ENCODE measurements at regions of chr5 and their contacts with region 1.

Region 1: GRCh38 chr5:150398722-150399523 is 13.8 kb downstream of the CD74 start:
- DNase-seq: peak; percentile 82
- CTCF ChIP-seq: peak; percentile 75

Region 2: DNA sequence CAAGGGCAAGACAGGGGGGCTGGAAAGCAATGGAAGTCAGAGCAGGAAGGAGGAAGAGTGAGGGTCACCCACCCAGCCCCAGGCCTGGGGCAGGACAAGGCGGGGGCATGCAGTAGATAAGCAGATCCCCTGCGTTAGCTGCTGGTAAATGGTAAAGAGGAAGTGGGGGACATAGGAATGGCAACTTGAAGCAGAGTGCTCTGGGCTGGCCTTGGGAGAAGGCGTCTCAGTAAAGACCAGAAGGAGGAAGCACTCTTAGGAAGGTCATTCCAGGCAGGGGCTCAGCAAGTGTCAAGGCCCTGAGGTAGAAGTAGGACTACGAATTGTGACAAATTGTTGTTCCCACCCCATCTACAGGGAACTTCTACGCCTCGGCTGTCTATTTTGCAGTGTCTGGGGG is 26.3 kb before region 1 on chr5:
- CTCF ChIA-PET with region 1: interaction called, 10 read pairs
- POLR2A ChIA-PET with region 1: interaction called, 3 read pairs
- DNase-seq: no peak
- CTCF ChIP-seq: no peak

Region 3: GRCh38 chr5:150377964-150378694 is 20.8 kb before region 1 on chr5:
- CTCF ChIA-PET with region 1: interaction called, 10 read pairs
- POLR2A ChIA-PET with region 1: interaction called, 19 read pairs
- DNase-seq: no peak
- CTCF ChIP-seq: no peak

Region 4: DNA sequence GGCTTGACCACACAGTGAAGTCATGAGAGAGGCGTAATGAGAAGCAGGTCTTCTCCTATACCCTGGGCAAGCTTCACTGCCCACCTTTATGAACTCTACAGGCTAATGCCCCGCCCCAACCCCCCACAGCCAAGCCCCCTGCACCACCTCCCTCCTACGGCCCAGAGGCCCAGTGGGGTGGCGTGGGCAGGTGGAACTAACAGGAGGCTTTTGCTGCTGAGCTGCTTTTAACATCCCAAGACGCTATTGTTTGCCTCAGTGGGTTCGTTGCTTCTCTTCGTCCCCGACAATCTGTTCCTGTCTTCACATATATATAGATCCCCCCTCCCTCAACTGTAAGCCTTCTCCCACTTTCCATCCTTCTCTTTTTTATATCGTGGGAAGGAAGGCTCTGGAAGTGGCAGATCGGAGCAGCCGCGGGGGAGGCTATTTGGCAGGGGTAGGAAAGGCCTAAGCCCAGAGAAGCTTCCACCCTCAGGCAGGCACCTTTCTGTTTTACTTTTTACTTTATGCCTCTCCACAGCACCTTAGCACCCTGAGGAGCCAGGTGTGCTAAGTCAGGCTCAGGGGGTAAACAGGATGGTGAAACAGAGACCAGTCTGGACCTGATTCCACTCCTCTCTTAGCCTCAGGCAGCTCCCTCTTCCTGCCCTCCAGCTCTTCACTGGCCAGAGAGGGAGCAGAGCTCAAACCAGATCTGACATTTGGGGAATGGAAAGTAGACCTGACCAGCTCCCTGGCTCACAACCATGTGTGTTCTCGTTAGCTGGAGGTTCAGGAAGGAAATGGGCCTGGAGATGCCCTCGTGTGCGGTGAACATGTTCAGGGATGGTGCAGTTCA is 12.7 kb before region 1 on chr5:
- CTCF ChIA-PET with region 1: interaction called, 29 read pairs
- POLR2A ChIA-PET with region 1: interaction called, 19 read pairs
- DNase-seq: no peak
- CTCF ChIP-seq: no peak

Region 5: DNA sequence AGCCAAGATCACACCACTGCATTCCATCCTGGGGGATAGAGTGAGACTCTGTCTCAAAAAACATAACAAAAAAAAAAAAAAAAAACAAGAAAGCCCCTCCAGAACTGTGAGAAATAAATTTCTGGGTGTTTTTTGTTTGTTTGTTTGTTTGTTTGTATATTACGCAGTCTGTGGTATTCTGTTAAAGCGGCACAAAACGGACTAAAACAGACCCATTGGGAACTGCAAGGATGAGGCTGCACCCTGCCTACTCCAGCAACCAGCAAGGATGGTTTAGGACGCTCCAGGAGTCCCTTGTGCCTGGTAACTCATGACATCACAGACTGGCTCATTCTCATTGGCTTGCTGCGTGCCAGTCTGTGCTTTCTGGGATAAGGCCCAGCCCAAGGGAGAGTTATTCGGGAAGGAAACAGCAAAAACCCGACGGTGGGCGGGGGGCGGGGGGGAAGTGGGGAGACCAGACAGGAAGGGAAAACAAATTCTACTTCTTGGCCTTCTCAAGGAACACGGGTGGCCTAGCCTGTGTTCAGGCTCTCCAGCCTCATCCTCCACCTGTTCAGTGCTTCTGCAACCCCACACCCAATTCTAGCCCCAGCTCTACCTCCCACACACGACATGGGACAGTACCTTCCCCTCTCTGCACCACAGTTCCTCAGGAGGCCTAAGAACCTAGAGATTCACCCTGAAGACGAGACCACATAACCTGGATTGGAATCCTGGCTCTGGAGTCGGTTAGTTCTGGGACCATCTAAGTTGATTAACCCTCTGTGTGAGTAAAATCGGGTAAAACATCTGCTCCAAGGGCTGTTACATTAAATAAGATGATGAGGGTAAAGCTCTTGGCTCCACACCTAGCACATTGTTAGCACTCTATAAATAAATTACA is 11.0 kb after region 1 on chr5:
- CTCF ChIA-PET with region 1: interaction called, 29 read pairs
- POLR2A ChIA-PET with region 1: interaction called, 63 read pairs
- DNase-seq: peak; percentile 67
- CTCF ChIP-seq: no peak

Region 6: GRCh38 chr5:150436141-150436680 is 37.3 kb after region 1 on chr5:
- CTCF ChIA-PET with region 1: interaction called, 222 read pairs
- POLR2A ChIA-PET with region 1: interaction called, 11 read pairs
- DNase-seq: peak; percentile 89
- CTCF ChIP-seq: peak; percentile 79

Region 7: DNA sequence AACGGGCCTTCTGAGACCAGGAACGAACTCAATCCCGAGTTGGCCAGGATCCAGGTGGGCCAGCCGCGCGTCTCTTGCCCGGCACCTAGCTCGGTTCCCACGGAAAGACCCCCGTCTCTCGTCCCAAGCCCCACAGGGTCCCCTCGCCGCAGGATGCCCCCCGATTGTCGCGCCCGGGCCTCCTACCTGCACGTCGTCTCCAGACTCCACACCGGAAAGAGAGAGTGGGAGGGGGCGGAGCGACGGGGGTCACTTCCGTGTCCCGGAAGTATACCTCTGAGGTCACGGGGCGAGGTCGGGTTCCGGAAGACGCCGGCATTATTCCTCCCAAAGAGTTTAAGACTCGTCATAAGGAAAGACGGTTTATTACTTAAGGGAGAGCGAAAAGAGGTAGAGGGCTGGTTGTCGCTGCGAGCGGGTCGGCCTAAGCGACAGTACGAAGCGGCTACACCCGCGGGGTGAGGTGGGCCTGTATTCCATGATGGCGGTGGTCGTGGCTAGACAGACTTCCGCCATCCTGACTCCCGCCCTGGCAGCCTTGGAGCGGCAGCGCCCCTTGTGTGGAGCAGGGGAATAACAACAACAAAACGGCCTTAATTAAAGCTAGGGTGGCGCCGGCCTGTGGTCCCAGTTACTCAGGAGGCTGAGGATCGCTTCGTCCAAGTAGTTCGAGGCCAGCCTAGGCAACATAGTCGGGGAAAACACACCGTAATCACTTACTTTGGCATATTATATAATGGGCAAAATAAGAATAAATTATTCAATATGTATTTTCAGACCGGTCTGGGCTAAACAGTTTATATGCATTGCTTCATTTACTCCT is 50.8 kb after region 1 on chr5 and contains the start of gene RPS14:
- CTCF ChIA-PET with region 1: interaction called, 21 read pairs
- POLR2A ChIA-PET with region 1: interaction called, 5 read pairs
- DNase-seq: peak; percentile 96
- CTCF ChIP-seq: peak; percentile 94

Measured in GM10248 (cell line).